ENCODE measurements at regions of chr14 and their contacts with region 1.

Region 1: DNA sequence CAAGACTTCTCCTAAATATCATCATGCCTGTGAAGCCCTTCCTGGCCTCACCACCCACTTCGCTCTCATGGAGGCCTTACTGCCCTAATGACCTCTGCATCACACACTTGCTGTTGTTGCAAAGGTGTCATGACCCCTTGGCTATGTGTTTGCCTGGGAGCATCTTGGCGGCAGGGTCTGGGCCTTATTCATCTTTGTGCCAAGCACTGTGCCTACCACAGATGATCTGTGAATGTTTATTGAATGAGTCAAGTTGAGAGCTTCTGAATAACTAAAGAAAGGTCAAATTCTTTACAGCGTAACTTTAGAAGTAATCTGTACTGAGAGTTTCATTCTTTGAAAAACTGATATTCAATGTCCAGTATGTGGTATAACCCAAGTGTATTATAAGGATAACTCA is 113.3 kb downstream of the TTC8 start:
- DNase-seq: peak; percentile 33
- ATAC-seq: 0 out of 2 replicates have a peak, but pooled peaks have one; percentile 15
- H3K4me3 ChIP-seq: no peak overlapping the region
- H3K27ac ChIP-seq: no peak overlapping the region
- H3K4me1 ChIP-seq: peaks cover 5% of the 10 kb centered on the region; the same call in 1 of the 2 replicates
- H3K27me3 ChIP-seq: no peaks in the 10 kb centered on the region
- CTCF ChIP-seq: no peak
- POLR2A ChIP-seq: no peak
- RAD21 ChIP-seq: no peak

Region 2: GRCh38 chr14:88452231-88452630 is 485.5 kb before region 1 on chr14:
- CTCF ChIA-PET with region 1: no interaction called
- POLR2A ChIA-PET with region 1: no interaction called
- dilution Hi-C with region 1: no loop called
- in situ Hi-C with region 1: no loop called
- intact Hi-C with region 1: no loop called
- DNase-seq: no peak
- ATAC-seq: no peak
- H3K4me3 ChIP-seq: no peak overlapping the region
- H3K27ac ChIP-seq: no peak overlapping the region
- H3K4me1 ChIP-seq: 0 out of 2 replicates have a peak, but pooled peaks cover 2% of the 10 kb centered on the region
- H3K27me3 ChIP-seq: no peaks in the 10 kb centered on the region
- CTCF ChIP-seq: no peak
- POLR2A ChIP-seq: no peak
- RAD21 ChIP-seq: no peak

Region 3: GRCh38 chr14:88695870-88696269 is 241.8 kb before region 1 on chr14:
- CTCF ChIA-PET with region 1: no interaction called
- POLR2A ChIA-PET with region 1: no interaction called
- dilution Hi-C with region 1: no loop called
- in situ Hi-C with region 1: no loop called
- intact Hi-C with region 1: no loop called
- DNase-seq: peak; percentile 30
- ATAC-seq: peak; percentile 51
- H3K4me3 ChIP-seq: no peak overlapping the region
- H3K27ac ChIP-seq: no peak overlapping the region
- H3K4me1 ChIP-seq: no peaks in the 10 kb centered on the region
- H3K27me3 ChIP-seq: no peaks in the 10 kb centered on the region
- CTCF ChIP-seq: no peak
- POLR2A ChIP-seq: no peak
- RAD21 ChIP-seq: no peak

Region 4: DNA sequence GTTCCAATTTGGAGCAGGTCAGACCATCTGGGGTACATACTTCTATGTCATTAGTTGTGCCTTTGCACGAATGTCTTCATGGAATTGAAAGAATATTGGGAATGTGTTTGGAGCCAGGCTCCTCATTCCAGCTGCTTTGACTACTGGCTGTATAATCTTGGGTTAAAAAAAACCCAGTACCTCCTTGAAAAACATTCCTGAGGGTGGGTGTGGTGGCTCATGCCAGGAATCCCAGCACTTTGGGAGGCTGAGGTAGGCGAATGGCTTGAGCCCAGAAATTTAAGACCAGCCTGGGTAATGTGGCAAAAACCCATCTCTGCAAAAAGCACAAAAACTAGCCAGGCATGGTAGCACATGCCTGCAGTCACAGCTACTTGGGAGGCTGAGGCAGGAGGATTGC is 12.4 kb after region 1 on chr14:
- CTCF ChIA-PET with region 1: interaction called, 5 read pairs
- POLR2A ChIA-PET with region 1: no interaction called
- dilution Hi-C with region 1: no loop called
- in situ Hi-C with region 1: no loop called
- intact Hi-C with region 1: loop called (anchors 1 kb)
- DNase-seq: no peak
- ATAC-seq: no peak
- H3K4me3 ChIP-seq: no peak overlapping the region
- H3K27ac ChIP-seq: no peak overlapping the region
- H3K4me1 ChIP-seq: peaks cover 2% of the 10 kb centered on the region
- H3K27me3 ChIP-seq: peaks cover 4% of the 10 kb centered on the region; the same call in 1 of the 2 replicates
- CTCF ChIP-seq: no peak
- POLR2A ChIP-seq: no peak
- RAD21 ChIP-seq: no peak

Measured in IMR-90 (cell line).